Calu3 (cell line): ENCODE measurements at regions of chr3 and their contacts with region 1.

Region 1: GRCh38 chr3:31567036-31567435 is 34.3 kb downstream of the STT3B start:
- DNase-seq: peak; percentile 24
- H3K4me3 Mint-ChIP-seq: no peak overlapping the region
- H3K27ac Mint-ChIP-seq: no peak overlapping the region
- H3K4me1 Mint-ChIP-seq: peaks cover 69% of the 10 kb centered on the region
- H3K27me3 Mint-ChIP-seq: no peaks in the 10 kb centered on the region
- CTCF ChIP-seq: no peak

Region 2: GRCh38 chr3:31432897-31433678 is 133.9 kb before region 1 on chr3:
- CTCF ChIA-PET with region 1: no interaction called
- intact Hi-C with region 1: no loop called
- DNase-seq: no peak
- H3K4me3 Mint-ChIP-seq: no peak overlapping the region
- H3K27ac Mint-ChIP-seq: no peak overlapping the region
- H3K4me1 Mint-ChIP-seq: peaks cover 10% of the 10 kb centered on the region
- H3K27me3 Mint-ChIP-seq: no peaks in the 10 kb centered on the region
- CTCF ChIP-seq: no peak

Region 3: DNA sequence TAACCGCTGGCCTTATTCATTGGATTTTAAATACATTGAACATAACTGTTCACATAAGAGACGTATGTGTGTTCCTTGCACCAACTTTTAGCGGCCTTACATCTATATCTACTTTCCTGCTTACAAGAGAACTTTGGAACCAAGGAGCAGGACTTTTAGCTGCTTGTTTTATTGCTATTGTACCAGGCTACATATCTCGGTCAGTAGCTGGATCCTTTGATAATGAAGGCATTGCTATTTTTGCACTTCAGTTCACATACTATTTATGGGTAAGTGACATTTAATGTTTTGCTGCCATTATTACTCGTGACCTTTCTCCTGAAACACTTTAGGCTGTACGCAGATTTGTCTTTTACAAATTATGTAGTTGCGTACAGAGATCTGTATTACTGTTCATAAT is 12.8 kb after region 1 on chr3:
- CTCF ChIA-PET with region 1: interaction called, 10 read pairs
- intact Hi-C with region 1: no loop called
- DNase-seq: no peak
- H3K4me3 Mint-ChIP-seq: no peak overlapping the region
- H3K27ac Mint-ChIP-seq: no peak overlapping the region
- H3K4me1 Mint-ChIP-seq: peaks cover 9% of the 10 kb centered on the region
- H3K27me3 Mint-ChIP-seq: no peaks in the 10 kb centered on the region
- CTCF ChIP-seq: no peak